ENCODE measurements at regions of chr2 and their contacts with region 1.

Region 1: GRCh38 chr2:189661148-189661956 is at the start of gene ASNSD1:
- DNase-seq: peak; percentile 94 to 100 (median 100)
- ATAC-seq: peak; percentile 85 to 87
- H3K4me3 Mint-ChIP-seq: no peak within 1 kb of the TSS
- H3K27ac Mint-ChIP-seq: no peak within 1 kb of the TSS
- H3K4me1 Mint-ChIP-seq: peaks cover 22 to 55% (median 45%) of the 10 kb centered on the region in 4 donors
- H3K27me3 Mint-ChIP-seq: no peaks in the 10 kb centered on the region
- polyA plus RNA-seq, gene ASNSD1: 44.0 to 73.7 (median 49.4) TPM

Region 2: DNA sequence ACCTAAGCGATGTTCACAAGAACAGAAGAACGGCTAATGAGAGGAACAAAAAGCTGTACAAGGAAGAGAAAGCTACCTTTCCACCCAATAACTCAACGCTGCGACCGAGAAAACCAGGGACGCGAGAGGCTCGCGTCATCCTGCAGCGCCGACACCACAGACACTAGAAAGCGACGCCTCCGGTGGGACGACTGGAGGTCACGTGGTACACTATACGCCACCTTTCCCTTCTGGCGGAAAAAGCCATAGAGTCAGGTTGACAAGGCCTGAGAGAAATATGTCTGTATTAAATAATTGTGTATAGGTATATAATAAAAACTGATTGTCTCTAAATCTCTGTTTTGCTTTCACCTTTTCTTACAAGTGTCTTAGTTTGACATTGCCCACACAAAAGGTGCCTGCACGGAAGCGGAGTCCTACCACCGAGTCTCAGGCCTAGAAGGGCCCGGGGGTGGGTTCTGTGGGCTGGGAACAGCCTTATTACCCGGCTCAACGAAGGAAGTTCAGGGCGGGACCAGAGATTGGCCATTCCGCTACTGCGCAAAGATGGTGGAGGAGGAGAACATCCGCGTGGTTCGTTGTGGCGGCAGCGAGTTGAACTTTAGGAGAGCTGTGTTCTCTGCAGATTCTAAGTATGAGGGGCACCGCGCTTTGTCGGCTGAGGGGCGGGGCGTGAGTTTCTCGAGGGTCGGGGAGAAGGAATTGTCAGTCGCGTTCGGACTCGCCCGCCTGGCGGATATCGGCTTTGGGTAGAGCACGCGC is 220.2 kb before region 1 on chr2 and contains the start of gene WDR75:
- POLR2A ChIA-PET with region 1: interaction called, 13 read pairs
- DNase-seq: peak; percentile 76 to 97 (median 90)
- ATAC-seq: peak; percentile 93
- H3K4me3 Mint-ChIP-seq: peak within 1 kb of the TSS in 4 of 10 donors; percentile 97 to 100 (median 100)
- H3K27ac Mint-ChIP-seq: peak within 1 kb of the TSS in 9 of 10 donors; percentile 99 to 100 (median 100)
- H3K4me1 Mint-ChIP-seq: peaks cover 0 to 19% (median 11%) of the 10 kb centered on the region in 4 donors
- H3K27me3 Mint-ChIP-seq: no peaks in the 10 kb centered on the region
- polyA plus RNA-seq, gene WDR75: 8.3 to 17.5 (median 9.5) TPM

Region 3: DNA sequence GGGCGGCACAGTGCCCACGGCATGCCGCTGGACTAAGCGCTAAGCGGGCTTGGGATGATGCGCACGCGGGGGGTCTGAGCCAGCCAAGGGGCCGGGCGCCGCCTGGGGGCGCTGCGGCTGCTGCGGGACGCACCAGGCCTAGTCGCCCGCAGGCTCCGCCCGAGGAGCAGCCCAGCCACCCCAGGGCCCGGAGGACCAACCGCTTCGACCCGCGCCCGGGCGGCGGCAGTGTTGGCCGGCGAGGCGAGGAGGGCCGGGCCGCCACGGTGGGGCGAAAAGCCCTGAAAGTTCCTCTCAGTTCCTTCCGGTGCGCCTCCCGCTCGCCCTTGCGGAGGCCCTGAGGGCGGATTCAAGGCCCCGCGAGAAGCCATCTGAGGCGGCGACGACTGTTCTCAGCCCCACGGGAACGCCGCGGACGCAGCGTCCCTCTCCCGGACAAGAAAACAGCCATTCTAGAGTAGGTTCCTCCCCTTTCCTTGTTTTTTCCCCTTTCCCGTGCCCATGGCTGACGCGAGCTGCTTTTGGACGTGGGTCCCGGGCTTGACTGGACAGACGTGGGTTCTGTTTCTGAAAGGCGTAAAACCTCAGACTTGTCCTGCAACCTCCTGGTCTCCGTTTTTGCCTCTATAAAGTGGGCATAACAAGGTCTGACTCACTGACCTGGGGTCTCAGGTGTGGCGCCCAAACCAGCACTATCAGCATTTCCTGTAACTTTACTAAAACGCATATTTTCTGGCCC is 13.2 kb after region 1 on chr2 and contains the start of gene ANKAR:
- POLR2A ChIA-PET with region 1: interaction called, 46 read pairs
- DNase-seq: peak; percentile 68 to 87 (median 82)
- ATAC-seq: peak; percentile 93
- H3K4me3 Mint-ChIP-seq: peak within 1 kb of the TSS; percentile 87 to 97 (median 96)
- H3K27ac Mint-ChIP-seq: peak within 1 kb of the TSS; percentile 96 to 99 (median 98)
- H3K4me1 Mint-ChIP-seq: peaks cover 20 to 52% (median 35%) of the 10 kb centered on the region in 4 donors
- H3K27me3 Mint-ChIP-seq: no peaks in the 10 kb centered on the region
- polyA plus RNA-seq, gene ANKAR: 3.6 to 6.4 (median 5.0) TPM

Region 4: GRCh38 chr2:189685540-189686229 is 24.3 kb after region 1 on chr2:
- POLR2A ChIA-PET with region 1: no interaction called
- DNase-seq: peak in 2 of 10 donors; percentile 14 to 16
- ATAC-seq: no peak
- H3K4me3 Mint-ChIP-seq: no peak overlapping the region
- H3K27ac Mint-ChIP-seq: peak overlapping the region in 4 of 10 donors; percentile 1 to 40 (median 6)
- H3K4me1 Mint-ChIP-seq: peaks cover 12 to 32% (median 24%) of the 10 kb centered on the region in 4 donors
- H3K27me3 Mint-ChIP-seq: no peaks in the 10 kb centered on the region

Measured in naive thymus-derived CD8-positive, alpha-beta T cell (primary cell).